WTC11 (cell line): ENCODE measurements at regions of chr5 and their contacts with region 1.

Region 1: DNA sequence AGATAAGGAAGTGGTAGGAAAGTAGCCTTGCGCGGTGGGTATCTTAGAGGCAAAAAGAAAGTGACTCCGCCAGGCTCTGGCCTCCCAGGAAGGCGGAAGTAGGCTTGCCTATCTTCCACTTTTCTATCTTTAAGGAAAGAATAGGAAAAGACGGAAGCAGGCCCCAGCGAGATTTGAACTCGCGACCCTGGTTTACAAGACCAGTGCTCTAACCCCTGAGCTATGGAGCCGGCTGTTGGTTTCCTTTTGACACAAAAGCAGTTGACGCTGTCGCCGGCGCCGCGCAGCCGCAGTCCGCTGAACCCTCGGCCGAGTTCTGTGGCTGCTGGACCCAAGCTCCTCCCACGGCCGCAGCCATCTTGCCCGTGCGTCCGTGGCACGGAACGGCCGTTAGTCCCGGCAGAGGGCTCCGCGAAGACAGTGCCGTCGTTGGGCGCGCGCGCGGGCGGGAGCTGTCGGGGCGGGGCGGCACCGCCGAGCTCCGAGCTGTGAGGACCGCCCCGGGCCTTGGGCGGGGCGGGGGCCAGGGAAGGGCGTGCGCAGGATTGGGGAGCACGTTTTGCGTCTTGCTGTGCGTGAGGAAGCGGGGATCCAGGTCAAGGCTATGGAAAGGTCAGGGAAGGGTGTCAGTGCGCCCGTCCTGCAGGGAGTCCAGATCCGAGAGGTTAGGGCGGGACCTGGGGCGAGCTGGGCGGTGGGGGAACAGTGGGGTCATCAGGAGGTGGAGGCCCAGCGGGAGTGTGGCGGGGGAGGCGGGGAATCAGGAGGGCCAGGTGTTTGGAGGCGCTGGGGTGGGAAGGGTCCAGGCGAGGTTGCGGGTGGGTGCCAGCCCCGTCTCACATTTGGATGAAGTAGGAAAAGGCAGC is 13.2 kb downstream of the TRIM7 start:
- DNase-seq: peak; percentile 96
- ATAC-seq: peak; percentile 59
- H3K4me3 Mint-ChIP-seq: peak overlapping the region; percentile 97
- H3K27ac Mint-ChIP-seq: no peak overlapping the region
- H3K4me1 Mint-ChIP-seq: peaks cover 14% of the 10 kb centered on the region
- H3K27me3 Mint-ChIP-seq: peaks cover 34% of the 10 kb centered on the region
- CTCF ChIP-seq: no peak

Region 2: GRCh38 chr5:181020688-181021087 is 171.1 kb before region 1 on chr5:
- CTCF ChIA-PET with region 1: no interaction called
- POLR2A ChIA-PET with region 1: no interaction called
- DNase-seq: no peak
- ATAC-seq: no peak
- H3K4me3 Mint-ChIP-seq: no peak overlapping the region
- H3K27ac Mint-ChIP-seq: no peak overlapping the region
- H3K4me1 Mint-ChIP-seq: no peaks in the 10 kb centered on the region
- H3K27me3 Mint-ChIP-seq: peaks cover 13% of the 10 kb centered on the region
- CTCF ChIP-seq: no peak

Region 3: GRCh38 chr5:181207214-181208107 is 15.7 kb after region 1 on chr5:
- CTCF ChIA-PET with region 1: interaction called, 42 read pairs
- POLR2A ChIA-PET with region 1: interaction called, 11 read pairs
- DNase-seq: peak; percentile 88
- ATAC-seq: peak; percentile 53
- H3K4me3 Mint-ChIP-seq: peak overlapping the region; percentile 94
- H3K27ac Mint-ChIP-seq: peak overlapping the region; percentile 52
- H3K4me1 Mint-ChIP-seq: peaks cover 18% of the 10 kb centered on the region
- H3K27me3 Mint-ChIP-seq: peaks cover 48% of the 10 kb centered on the region
- CTCF ChIP-seq: no peak